ENCODE measurements at regions of chr14 and their contacts with region 1.

Region 1: GRCh38 chr14:74860906-74861733 is 14.8 kb downstream of the PROX2 start:
- DNase-seq: peak; percentile 93
- ATAC-seq: peak; percentile 81 to 82

Region 2: DNA sequence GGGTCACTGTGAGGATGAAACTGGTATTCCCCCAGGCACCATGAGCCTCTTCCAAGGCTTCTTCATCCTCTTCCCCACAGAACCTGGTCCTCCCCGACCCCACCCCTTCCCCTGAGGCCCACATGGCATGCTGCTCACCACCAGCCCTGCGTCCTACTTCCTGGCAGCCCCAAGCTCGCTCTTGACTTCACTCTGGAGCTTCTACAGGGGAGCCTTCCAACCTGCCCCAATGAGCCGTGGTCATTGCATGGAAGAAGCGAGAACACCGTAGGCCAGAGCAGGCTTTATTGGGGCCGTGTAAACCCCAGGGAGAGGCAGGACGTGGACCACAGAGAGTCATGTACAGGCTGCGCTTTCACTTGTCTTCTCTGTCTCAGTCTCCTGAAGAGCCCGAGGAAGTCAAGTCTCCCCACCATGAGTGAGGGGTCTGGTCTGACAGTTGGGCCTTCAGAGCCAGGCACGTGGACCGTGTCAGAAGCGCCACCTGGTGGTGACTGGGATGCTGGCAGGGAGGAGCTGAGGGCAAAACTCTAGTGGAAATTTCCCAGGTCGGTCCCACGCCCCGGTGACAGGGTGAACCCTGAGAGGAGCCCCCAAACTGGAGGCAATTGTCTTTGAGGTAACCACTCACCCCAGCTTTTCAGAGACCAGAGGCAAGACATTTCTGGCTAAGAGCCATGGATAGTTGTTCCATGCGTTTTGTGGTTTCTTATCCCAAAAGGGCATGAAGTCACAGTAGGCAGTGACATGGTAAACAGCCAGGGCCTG is 44.4 kb after region 1 on chr14:
- intact Hi-C with region 1: loop called in 1 of 2 experiments (anchors 5 kb)
- DNase-seq: peak; percentile 83
- ATAC-seq: peak; percentile 53 to 61

Region 3: DNA sequence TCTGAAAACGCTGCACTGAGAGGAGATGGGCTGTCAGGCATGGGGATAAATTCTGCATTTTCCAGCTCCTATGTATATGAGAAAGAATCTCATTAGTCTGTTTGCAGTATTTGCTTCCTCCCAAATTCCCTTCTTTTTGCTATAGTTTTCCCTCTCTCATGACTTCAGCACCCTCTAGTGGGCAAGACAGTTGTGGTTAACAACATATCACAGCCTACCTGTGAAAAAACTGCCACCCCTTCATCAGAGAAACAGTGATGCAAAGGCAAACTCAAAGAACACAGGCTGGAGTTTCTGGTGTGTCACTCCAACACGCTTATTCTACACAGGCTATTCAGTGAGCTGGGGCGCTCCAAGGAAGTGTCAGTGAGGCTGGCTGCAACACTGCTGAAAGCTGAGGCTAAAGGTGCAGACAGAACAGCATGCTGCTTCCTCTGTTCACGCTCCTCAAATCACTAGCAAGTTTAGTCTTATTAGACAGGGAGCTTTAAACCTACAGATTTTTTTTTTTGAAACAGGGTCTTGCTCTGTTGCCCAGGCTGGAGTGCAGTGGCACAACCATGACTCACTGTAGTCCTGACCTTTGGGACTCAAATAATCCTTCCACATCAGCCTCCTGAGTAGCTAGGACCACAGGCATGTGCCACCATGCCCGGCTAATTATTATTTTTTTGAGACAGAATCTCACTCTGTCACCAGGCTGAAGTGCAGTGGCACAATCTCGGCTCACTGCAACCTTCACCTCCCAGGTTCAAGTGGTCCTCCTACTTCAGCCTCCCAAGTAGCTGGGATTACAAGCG is 227.7 kb after region 1 on chr14:
- intact Hi-C with region 1: loop called in 1 of 2 experiments (anchors 5 kb)
- DNase-seq: no peak
- ATAC-seq: peak; percentile 74 to 76

Region 4: GRCh38 chr14:75165586-75166391 is 304.7 kb after region 1 on chr14:
- intact Hi-C with region 1: no loop called
- DNase-seq: no peak
- ATAC-seq: peak in 1 of 2 donors; percentile 52